B cell (primary cell): ENCODE measurements at regions of chr9 and their contacts with region 1.

Region 1: GRCh38 chr9:129482521-129483414 is 138.1 kb downstream of the C9orf50 start:
- DNase-seq: peak; percentile 54
- ATAC-seq: peak; percentile 26
- H3K4me3 ChIP-seq: peak overlapping the region in 3 of 5 experiments; percentile 30 to 37 (median 34)
- H3K4me3 Mint-ChIP-seq: peak overlapping the region; percentile 75
- H3K27ac ChIP-seq: no peak overlapping the region
- H3K27ac Mint-ChIP-seq: no peak overlapping the region
- H3K4me1 ChIP-seq: peaks cover 25 to 26% of the 10 kb centered on the region in 2 donors
- H3K4me1 Mint-ChIP-seq: peaks cover 25% of the 10 kb centered on the region
- H3K27me3 ChIP-seq: peaks cover 0 to 42% (median 16%) of the 10 kb centered on the region in 4 experiments
- H3K27me3 Mint-ChIP-seq: peaks cover 38% of the 10 kb centered on the region
- CTCF ChIP-seq: no peak

Region 2: GRCh38 chr9:129451089-129452025 is 31.4 kb before region 1 on chr9:
- CTCF ChIA-PET with region 1: no interaction called
- POLR2A ChIA-PET with region 1: no interaction called
- intact Hi-C with region 1: no loop called
- DNase-seq: no peak
- ATAC-seq: no peak
- H3K4me3 ChIP-seq: no peak overlapping the region
- H3K4me3 Mint-ChIP-seq: no peak overlapping the region
- H3K27ac ChIP-seq: no peak overlapping the region
- H3K27ac Mint-ChIP-seq: no peak overlapping the region
- H3K4me1 ChIP-seq: no peaks in the 10 kb centered on the region
- H3K4me1 Mint-ChIP-seq: no peaks in the 10 kb centered on the region
- H3K27me3 ChIP-seq: peaks cover 0 to 5% (median 0%) of the 10 kb centered on the region in 4 experiments
- H3K27me3 Mint-ChIP-seq: peaks cover 10% of the 10 kb centered on the region
- CTCF ChIP-seq: no peak

Region 3: GRCh38 chr9:129495534-129496325 is 13.0 kb after region 1 on chr9:
- CTCF ChIA-PET with region 1: no interaction called
- POLR2A ChIA-PET with region 1: interaction called, 5 read pairs
- intact Hi-C with region 1: loop called (anchors 1 kb)
- DNase-seq: peak; percentile 73
- ATAC-seq: peak; percentile 77
- H3K4me3 ChIP-seq: peak overlapping the region; percentile 46 to 63 (median 56)
- H3K4me3 Mint-ChIP-seq: peak overlapping the region; percentile 82
- H3K27ac ChIP-seq: no peak overlapping the region
- H3K27ac Mint-ChIP-seq: peak overlapping the region; percentile 37
- H3K4me1 ChIP-seq: peaks cover 20 to 21% of the 10 kb centered on the region in 2 donors
- H3K4me1 Mint-ChIP-seq: peaks cover 19% of the 10 kb centered on the region
- H3K27me3 ChIP-seq: peaks cover 0 to 31% (median 11%) of the 10 kb centered on the region in 4 experiments
- H3K27me3 Mint-ChIP-seq: peaks cover 20% of the 10 kb centered on the region
- CTCF ChIP-seq: no peak